Activated T-helper 2 cell treated with anti-CD3 and anti-CD28 coated beads, Interferon-gamma antibody, Interleukin-2, Interleukin-4, amounts not matched to agents 10 μg/mL and 5 μg/mL and 100 μg/mL, durations not matched to agents 14 hours and 24 hours and 36 hours (primary cell): ENCODE measurements at regions of chr6 and their contacts with region 1.

Region 1: GRCh38 chr6:16657768-16658167 is 103.5 kb downstream of the ATXN1 start:
- DNase-seq: no peak
- H3K4me3 Mint-ChIP-seq: peak overlapping the region; percentile 61
- H3K27ac Mint-ChIP-seq: peak overlapping the region; percentile 86
- H3K4me1 Mint-ChIP-seq: peaks cover 66% of the 10 kb centered on the region
- H3K27me3 Mint-ChIP-seq: no peaks in the 10 kb centered on the region

Region 2: GRCh38 chr6:16420715-16421461 is 236.9 kb before region 1 on chr6:
- intact Hi-C with region 1: loop called (anchors 5 kb)
- DNase-seq: peak; percentile 48
- H3K4me3 Mint-ChIP-seq: peak overlapping the region; percentile 72
- H3K27ac Mint-ChIP-seq: peak overlapping the region; percentile 98
- H3K4me1 Mint-ChIP-seq: peaks cover 54% of the 10 kb centered on the region
- H3K27me3 Mint-ChIP-seq: no peaks in the 10 kb centered on the region

Region 3: DNA sequence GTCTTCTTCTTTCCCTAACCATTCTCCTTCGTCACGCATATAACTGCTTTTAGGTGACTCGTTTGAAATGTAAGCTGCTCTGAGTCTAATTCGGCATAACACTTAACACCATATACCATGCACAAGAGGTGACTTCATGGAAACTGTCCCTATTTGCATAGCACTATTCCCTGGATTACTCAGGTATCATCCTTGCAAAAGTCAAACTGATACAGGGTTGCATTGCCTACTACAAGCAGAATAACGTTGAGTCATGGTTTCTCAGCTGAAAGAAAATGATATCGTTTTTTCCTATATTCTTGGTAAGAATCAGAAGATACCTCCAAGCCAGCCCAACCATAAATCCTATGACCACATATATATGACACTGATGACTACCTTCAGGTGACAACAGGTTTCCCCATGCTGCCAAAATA is 124.0 kb before region 1 on chr6:
- intact Hi-C with region 1: loop called (anchors 1 kb)
- DNase-seq: no peak
- H3K4me3 Mint-ChIP-seq: no peak overlapping the region
- H3K27ac Mint-ChIP-seq: peak overlapping the region; percentile 52
- H3K4me1 Mint-ChIP-seq: peaks cover 36% of the 10 kb centered on the region
- H3K27me3 Mint-ChIP-seq: no peaks in the 10 kb centered on the region

Region 4: DNA sequence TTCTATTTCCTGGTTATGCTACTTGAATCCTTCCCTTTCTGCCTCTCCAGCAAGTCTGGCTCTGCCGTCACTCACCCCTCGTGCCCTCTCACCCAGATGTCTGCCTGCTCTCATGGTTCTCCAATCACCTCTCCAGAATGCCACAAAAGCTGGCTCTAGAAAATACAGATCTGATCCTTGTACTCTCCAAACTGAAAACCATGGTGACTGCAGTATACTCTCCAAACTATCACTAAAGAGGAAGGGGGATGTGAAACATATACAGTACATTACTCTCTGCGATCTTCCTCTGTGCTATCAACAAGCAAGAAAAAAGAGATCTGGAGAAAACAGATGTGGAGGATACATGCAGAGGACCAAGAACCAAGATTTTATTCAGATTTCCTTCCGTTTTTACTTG is 12.4 kb after region 1 on chr6:
- intact Hi-C with region 1: loop called (anchors 1 kb)
- DNase-seq: no peak
- H3K4me3 Mint-ChIP-seq: peak overlapping the region; percentile 50
- H3K27ac Mint-ChIP-seq: peak overlapping the region; percentile 89
- H3K4me1 Mint-ChIP-seq: peaks cover 74% of the 10 kb centered on the region
- H3K27me3 Mint-ChIP-seq: no peaks in the 10 kb centered on the region

Region 5: GRCh38 chr6:16698997-16699868 is 41.5 kb after region 1 on chr6:
- intact Hi-C with region 1: loop called (anchors 1 kb)
- DNase-seq: no peak
- H3K4me3 Mint-ChIP-seq: peak overlapping the region; percentile 80
- H3K27ac Mint-ChIP-seq: peak overlapping the region; percentile 95
- H3K4me1 Mint-ChIP-seq: peaks cover 73% of the 10 kb centered on the region
- H3K27me3 Mint-ChIP-seq: no peaks in the 10 kb centered on the region

Region 6: DNA sequence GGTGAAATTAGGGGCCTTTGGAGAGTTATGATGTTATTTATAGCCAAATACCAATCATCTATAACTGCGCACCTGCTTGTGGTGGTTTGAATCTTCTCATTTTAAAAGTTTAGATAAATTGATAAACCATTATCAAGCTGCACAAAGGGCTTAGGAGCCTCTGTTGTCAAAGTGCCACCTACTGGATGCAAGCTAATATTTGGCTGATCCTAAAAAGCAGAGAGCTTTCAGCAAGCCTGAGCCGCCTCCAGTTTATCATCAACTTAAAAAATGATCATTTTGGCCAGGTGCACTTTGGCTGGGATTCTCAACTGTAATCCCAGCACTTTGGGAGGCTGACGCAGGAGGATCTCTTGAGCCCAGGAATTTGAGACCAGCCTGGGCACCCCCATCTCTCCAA is 162.0 kb after region 1 on chr6:
- intact Hi-C with region 1: no loop called
- DNase-seq: no peak
- H3K4me3 Mint-ChIP-seq: no peak overlapping the region
- H3K27ac Mint-ChIP-seq: no peak overlapping the region
- H3K4me1 Mint-ChIP-seq: no peaks in the 10 kb centered on the region
- H3K27me3 Mint-ChIP-seq: peaks cover 47% of the 10 kb centered on the region